ENCODE measurements at regions of chr4 and their contacts with region 1.

Region 1: DNA sequence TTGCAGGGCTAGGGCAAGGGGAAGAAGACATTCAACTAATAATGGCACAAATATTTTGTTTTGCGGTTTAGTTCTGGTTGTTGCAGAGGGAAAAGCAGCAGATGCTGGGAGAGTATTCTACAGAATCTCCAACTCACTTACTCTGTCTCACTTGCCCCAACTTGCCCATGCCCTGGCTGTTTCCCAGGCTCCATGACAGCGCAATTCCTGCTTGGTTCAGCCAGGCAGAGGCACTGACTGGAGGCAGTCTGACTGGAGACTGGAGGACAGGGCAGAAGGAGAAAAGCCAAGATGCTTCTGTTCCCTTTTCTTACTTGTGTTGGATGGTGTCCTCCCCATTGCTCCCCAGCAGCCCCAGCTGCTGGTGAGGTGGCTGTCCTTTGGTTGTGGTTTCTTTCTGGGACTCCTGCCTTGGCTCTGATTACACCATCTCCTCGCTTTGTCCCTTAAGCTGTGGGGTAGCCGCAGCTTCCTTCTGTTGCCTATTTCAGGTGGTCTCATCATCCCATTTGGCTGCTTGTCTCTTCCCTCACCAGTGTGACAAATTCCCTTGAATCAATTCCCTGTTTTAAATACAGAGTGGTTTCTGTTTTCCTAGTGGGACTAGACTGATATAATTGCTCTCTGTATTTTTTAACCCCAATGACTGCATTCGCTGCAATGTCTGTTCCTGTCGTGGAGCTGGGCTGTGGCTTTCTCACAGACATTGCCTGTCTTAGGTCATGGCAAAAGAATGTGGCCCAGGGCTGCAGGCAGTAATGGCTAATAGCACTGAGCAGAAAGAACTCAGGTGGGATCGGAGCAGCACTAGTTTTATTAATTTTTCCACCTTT is 24.2 kb upstream of the RASL11B start:
- DNase-seq: peak; percentile 69 to 75
- H3K4me3 ChIP-seq: peak overlapping the region; percentile 21; the same call in 1 of the 2 replicates
- H3K27ac ChIP-seq: peak overlapping the region; percentile 76
- H3K4me1 ChIP-seq: peaks cover 29% of the 10 kb centered on the region
- H3K27me3 ChIP-seq: no peaks in the 10 kb centered on the region
- CTCF ChIP-seq: no peak

Region 2: GRCh38 chr4:52376132-52376704 is 461.7 kb before region 1 on chr4:
- CTCF ChIA-PET with region 1: no interaction called
- POLR2A ChIA-PET with region 1: no interaction called
- intact Hi-C with region 1: no loop called
- DNase-seq: no peak
- H3K4me3 ChIP-seq: no peak overlapping the region
- H3K27ac ChIP-seq: no peak overlapping the region
- H3K4me1 ChIP-seq: no peaks in the 10 kb centered on the region
- H3K27me3 ChIP-seq: no peaks in the 10 kb centered on the region
- CTCF ChIP-seq: peak; percentile 84

Region 3: DNA sequence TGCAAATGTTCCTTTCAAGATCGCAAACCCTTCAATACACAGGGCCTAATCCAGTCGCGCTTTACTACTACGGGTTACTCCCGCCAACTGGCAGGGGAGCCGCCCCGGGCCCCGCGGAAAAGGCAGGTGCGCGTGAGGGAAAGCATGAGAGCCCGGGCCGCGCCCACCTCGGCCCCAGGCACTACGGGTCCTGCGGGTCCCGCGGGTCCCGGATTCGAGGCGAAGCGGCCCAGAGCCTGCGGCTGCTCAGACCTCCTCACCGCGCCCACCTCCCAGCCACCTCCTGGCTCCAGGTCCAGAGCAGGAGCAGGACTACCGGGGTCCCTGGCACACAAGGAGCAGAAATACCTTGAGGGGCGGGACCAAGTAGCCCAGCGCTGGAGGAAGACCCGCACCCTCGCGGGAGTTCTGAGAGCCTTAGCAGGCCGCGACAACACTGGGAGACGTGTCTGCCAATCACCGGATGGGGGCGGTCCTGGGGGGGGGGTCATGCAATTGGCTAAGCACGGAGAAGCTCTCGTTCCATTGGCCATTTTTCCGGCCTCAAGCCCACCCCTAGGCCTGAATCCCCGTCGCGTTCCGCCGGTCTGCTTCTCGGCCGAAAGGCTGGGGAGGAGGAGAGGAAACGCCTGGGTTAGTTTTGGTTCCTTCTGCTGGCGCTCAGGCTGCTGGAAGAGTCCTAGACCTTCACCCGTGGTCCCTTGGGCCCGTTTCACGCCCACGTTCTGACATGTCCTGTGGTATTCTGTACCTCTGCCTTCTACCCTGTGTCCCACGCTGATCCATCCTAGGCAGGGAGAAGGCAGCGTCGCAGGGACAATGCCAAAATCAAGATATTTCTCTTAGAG is 115.8 kb before region 1 on chr4:
- CTCF ChIA-PET with region 1: interaction called, 6 read pairs
- POLR2A ChIA-PET with region 1: interaction called, 6 read pairs
- intact Hi-C with region 1: loop called (anchors 2 kb)
- DNase-seq: peak; percentile 88 to 92
- H3K4me3 ChIP-seq: peak overlapping the region; percentile 79
- H3K27ac ChIP-seq: peak overlapping the region; percentile 42
- H3K4me1 ChIP-seq: peaks cover 11% of the 10 kb centered on the region; the same call in 1 of the 2 replicates
- H3K27me3 ChIP-seq: no peaks in the 10 kb centered on the region
- CTCF ChIP-seq: no peak

Region 4: GRCh38 chr4:52861879-52862616 is 24.1 kb after region 1 on chr4 and contains the start of gene RASL11B:
- CTCF ChIA-PET with region 1: interaction called, 16 read pairs
- POLR2A ChIA-PET with region 1: no interaction called
- intact Hi-C with region 1: no loop called
- DNase-seq: peak in 1 of 2 experiments; percentile 78
- H3K4me3 ChIP-seq: peak within 1 kb of the TSS; percentile 56; the same call in 1 of the 2 replicates
- H3K27ac ChIP-seq: no peak within 1 kb of the TSS
- H3K4me1 ChIP-seq: no peaks in the 10 kb centered on the region; the same call in 1 of the 2 replicates
- H3K27me3 ChIP-seq: no peaks in the 10 kb centered on the region
- CTCF ChIP-seq: no peak
- total RNA-seq, gene RASL11B: 0.25 TPM in 1 of 2 replicates, not detected in the other

Region 5: GRCh38 chr4:52983563-52984303 is 145.8 kb after region 1 on chr4:
- CTCF ChIA-PET with region 1: no interaction called
- POLR2A ChIA-PET with region 1: no interaction called
- intact Hi-C with region 1: no loop called
- DNase-seq: peak; percentile 5 to 36
- H3K4me3 ChIP-seq: no peak overlapping the region
- H3K27ac ChIP-seq: no peak overlapping the region
- H3K4me1 ChIP-seq: peaks cover 6% of the 10 kb centered on the region; the same call in 1 of the 2 replicates
- H3K27me3 ChIP-seq: no peaks in the 10 kb centered on the region
- CTCF ChIP-seq: peak; percentile 79